HepG2 (cell line): ENCODE measurements at regions of chr17 and their contacts with region 1.

Region 1: DNA sequence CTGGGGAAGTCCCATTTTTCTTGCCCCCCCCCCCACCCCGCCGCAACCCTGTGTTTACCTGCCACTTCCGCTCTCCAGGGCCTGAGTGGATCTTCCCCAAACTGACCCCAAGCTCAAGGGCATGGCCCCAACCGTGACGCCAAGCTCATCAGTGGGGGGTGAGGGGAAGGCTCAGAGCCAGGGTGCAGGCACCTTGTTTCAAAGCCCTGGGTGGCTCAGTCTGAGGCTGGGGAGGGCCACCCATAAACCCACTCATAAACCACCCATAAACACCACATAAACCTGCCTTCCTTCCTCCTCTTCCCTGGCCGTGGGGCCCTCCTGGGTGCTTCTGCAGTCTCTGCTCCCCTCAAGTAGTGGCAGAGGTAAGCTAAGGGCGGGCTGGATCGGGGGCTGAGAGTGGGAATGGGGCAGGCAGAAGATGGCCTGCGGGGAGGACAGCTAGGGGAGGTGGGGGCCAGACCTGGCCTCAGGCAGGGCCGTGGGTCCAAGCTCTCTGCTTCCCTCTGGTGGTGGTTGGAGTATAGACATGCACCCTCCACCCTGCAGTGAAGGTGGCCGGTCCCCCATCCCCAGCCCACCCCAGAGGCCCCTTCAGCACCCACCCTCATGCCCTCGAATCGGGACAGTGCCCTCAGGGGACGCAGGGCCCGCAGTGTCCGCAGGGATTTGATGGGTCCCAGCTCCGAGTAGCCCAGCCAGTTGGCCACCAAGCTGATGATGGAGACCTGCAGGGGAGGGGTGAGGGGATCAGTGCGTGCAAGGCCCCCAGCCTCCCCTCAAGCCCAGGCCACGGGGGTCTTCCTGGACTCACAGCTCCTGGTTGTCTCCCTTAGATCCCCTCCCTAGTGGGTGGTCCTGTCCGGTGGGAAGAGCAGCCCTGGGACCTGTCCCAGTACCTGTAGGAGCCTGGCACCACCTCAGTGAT is 14.6 kb upstream of the CD79B start:
- DNase-seq: peak; percentile 48
- ATAC-seq: peak; percentile 83
- H3K4me3 ChIP-seq: peak overlapping the region in 2 of 3 experiments; percentile 35 to 66; a peak in 3 of 6 replicates
- H3K27ac ChIP-seq: no peak overlapping the region
- H3K4me1 ChIP-seq: peaks cover 26% of the 10 kb centered on the region
- H3K27me3 ChIP-seq: peaks cover 19 to 44% of the 10 kb centered on the region in 2 experiments; a peak in 4 of 5 replicates
- CTCF ChIP-seq: peak; percentile 92
- EP300 ChIP-seq: no peak
- POLR2A ChIP-seq: no peak
- RAD21 ChIP-seq: peak; percentile 69

Region 2: DNA sequence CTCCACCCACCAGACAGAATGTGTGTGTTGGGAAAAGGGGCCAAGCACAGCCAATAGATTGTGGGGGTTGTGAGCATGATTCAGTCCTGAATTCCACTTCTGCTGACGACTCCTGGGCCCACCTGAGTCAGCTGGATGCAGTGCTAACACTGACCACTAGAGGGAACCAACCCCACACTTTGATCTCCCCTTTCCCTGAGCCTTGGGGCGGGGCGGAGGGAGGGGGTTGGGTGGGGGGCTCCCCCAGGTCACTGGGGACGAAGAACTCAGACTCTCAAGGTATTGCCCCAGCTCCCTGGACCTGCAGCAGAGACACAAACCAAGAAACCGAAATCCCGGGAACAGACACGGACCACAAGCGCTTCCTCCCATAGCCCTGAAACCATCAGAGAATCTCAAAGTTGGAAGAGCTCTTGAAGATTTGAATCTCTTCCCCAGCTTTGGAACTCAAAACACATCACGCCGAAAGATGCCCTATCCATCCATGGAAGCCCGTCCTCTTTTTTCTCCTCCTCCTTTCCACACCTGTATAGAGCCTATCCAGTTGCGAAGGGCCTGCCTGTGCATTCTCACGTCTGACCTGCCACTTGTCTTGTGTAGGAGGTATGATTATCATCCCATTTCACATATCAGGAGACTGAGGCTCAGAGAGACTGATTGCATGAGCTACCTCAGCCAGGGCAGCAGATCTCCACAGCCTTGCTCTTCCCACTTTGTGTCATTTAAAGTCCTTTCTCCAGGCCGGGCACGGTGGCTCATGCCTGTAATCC is 34.9 kb before region 1 on chr17:
- CTCF ChIA-PET with region 1: interaction called, 10 read pairs
- POLR2A ChIA-PET with region 1: no interaction called
- in situ Hi-C with region 1: loop called (anchors 5 kb)
- intact Hi-C with region 1: loop called (anchors 1 kb)
- DNase-seq: no peak
- ATAC-seq: peak; percentile 80
- H3K4me3 ChIP-seq: no peak overlapping the region
- H3K27ac ChIP-seq: no peak overlapping the region
- H3K4me1 ChIP-seq: peaks cover 10% of the 10 kb centered on the region
- H3K27me3 ChIP-seq: peaks cover 4 to 54% of the 10 kb centered on the region in 2 experiments; a peak in 4 of 5 replicates
- CTCF ChIP-seq: peak; percentile 77
- EP300 ChIP-seq: no peak
- POLR2A ChIP-seq: no peak
- RAD21 ChIP-seq: no peak

Region 3: GRCh38 chr17:63919311-63919723 is 27.4 kb before region 1 on chr17:
- CTCF ChIA-PET with region 1: interaction called, 25 read pairs
- POLR2A ChIA-PET with region 1: interaction called, 10 read pairs
- in situ Hi-C with region 1: loop called (anchors 5 kb)
- intact Hi-C with region 1: loop called (anchors 2 kb)
- DNase-seq: peak; percentile 44
- ATAC-seq: peak; percentile 92
- H3K4me3 ChIP-seq: no peak overlapping the region
- H3K27ac ChIP-seq: no peak overlapping the region
- H3K4me1 ChIP-seq: peaks cover 16% of the 10 kb centered on the region
- H3K27me3 ChIP-seq: peaks cover under 1 to 24% of the 10 kb centered on the region in 2 experiments; a peak in 3 of 5 replicates
- CTCF ChIP-seq: peak; percentile 94
- EP300 ChIP-seq: no peak
- POLR2A ChIP-seq: no peak
- RAD21 ChIP-seq: peak; percentile 90

Region 4: DNA sequence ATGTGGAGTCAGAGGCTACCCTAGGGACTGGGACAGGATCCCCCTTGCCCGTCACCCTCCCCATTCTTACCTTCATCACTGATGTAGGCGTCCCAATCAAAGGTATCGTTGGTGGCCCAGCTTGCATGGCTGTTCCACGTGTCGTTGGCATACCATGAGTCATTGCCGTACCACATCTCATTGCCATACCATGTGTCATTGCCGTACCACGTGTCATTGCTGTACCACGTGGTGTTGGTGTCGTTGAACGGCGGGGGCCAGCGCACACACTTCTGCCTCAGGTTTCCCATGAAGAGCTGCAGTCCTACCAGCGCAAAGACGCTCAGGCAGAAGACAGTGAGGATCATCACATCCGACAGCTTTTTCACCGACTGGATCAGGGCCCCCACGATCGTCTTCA is 21.2 kb after region 1 on chr17:
- CTCF ChIA-PET with region 1: no interaction called
- POLR2A ChIA-PET with region 1: no interaction called
- in situ Hi-C with region 1: no loop called
- intact Hi-C with region 1: no loop called
- DNase-seq: no peak
- ATAC-seq: no peak
- H3K4me3 ChIP-seq: no peak overlapping the region
- H3K27ac ChIP-seq: no peak overlapping the region
- H3K4me1 ChIP-seq: no peaks in the 10 kb centered on the region
- H3K27me3 ChIP-seq: peaks cover 5 to 25% of the 10 kb centered on the region in 2 experiments; a peak in 4 of 5 replicates
- CTCF ChIP-seq: no peak
- EP300 ChIP-seq: no peak
- POLR2A ChIP-seq: no peak
- RAD21 ChIP-seq: no peak

Region 5: DNA sequence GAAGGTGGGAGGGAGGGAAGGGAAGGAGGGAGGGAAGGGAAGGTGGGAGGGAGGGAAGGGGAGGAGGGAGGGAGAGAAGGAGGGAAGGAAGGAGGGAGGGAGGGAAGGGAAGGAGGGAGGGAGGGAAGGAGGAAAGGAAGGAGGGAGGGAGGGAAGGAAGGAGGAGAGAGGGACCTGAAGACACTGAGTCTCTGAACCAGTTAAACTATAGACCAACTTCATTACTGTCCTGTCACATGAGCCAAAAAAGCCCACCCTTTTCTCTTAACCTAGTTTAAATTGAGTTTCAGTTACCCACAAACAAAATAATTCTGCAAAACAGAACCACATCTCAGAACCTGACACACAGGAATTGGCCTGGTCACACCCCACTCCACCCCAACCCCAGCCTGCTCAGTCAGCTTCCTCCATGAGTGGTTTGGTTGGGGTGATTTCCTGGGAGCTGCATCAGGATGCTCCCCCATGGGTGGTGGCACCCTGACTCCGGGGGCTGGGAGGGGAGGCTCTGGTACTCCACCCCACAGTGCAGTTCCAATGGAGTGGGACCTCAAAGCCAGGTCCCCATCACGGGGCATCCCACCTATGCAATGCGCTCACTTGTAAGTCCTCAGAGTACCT is 46.8 kb after region 1 on chr17:
- CTCF ChIA-PET with region 1: interaction called, 6 read pairs
- POLR2A ChIA-PET with region 1: no interaction called
- in situ Hi-C with region 1: no loop called
- intact Hi-C with region 1: loop called (anchors 1 kb)
- DNase-seq: no peak
- ATAC-seq: no peak
- H3K4me3 ChIP-seq: no peak overlapping the region
- H3K27ac ChIP-seq: no peak overlapping the region
- H3K4me1 ChIP-seq: peaks cover 24% of the 10 kb centered on the region
- H3K27me3 ChIP-seq: peaks cover 24 to 64% of the 10 kb centered on the region in 2 experiments
- CTCF ChIP-seq: no peak
- EP300 ChIP-seq: no peak
- POLR2A ChIP-seq: no peak
- RAD21 ChIP-seq: no peak

Region 6: GRCh38 chr17:64016231-64016784 is 69.6 kb after region 1 on chr17:
- CTCF ChIA-PET with region 1: no interaction called
- POLR2A ChIA-PET with region 1: no interaction called
- in situ Hi-C with region 1: no loop called
- intact Hi-C with region 1: no loop called
- DNase-seq: no peak
- ATAC-seq: peak; percentile 56; the same call in 2 of the 3 replicates
- H3K4me3 ChIP-seq: no peak overlapping the region
- H3K27ac ChIP-seq: no peak overlapping the region
- H3K4me1 ChIP-seq: peaks cover 15% of the 10 kb centered on the region
- H3K27me3 ChIP-seq: no peaks in the 10 kb centered on the region; a peak in 1 of 5 replicates
- CTCF ChIP-seq: peak; percentile 41
- EP300 ChIP-seq: no peak
- POLR2A ChIP-seq: no peak
- RAD21 ChIP-seq: no peak